Common myeloid progenitor, CD34-positive (primary cell): ENCODE measurements at regions of chr11 and their contacts with region 1.

Region 1: DNA sequence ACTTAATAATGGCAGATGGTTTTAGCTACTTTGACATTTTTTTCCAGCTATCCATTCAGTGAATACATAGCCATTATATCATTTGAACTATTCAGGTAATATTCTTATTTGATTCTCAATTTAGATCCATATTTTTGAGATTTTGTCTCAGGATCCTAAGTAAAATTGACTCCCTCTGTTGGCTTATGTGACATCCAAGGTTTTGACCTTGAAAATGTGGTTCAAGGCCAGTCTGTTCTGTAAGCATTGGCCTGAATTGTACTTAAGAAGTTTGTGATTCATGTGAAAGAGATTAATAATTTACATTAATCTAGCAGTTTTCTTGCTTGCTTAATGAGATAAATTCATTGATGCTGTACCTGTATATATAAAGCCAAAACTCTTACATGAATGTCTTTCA is 1.6 kb upstream of the SLC17A6 start:
- DNase-seq: no peak
- H3K4me3 ChIP-seq: no peak overlapping the region
- H3K27ac ChIP-seq: no peak overlapping the region
- H3K4me1 ChIP-seq: no peaks in the 10 kb centered on the region
- H3K27me3 ChIP-seq: peaks cover 20 to 51% (median 36%) of the 10 kb centered on the region in 5 experiments

Region 2: DNA sequence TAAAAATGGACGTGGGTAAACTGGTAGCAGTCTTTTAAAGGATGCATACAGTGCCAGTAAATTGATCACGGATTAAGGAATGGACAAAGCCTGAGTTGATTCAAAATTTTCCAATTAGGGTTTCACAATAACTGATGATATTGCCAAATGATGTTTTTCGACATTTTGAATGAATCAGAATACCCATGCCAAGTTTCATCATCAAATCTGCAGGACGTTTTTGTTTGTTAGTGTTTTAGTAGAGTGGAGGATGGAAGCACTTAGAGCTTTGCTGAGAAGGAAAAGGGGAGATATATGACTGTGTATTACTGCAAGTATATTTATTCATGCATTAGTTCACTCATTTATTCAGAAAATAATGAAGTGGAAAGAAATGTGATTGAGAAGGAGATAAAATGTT is 79.9 kb after region 1 on chr11:
- CTCF ChIA-PET with region 1: no interaction called
- POLR2A ChIA-PET with region 1: no interaction called
- DNase-seq: no peak
- H3K4me3 ChIP-seq: no peak overlapping the region
- H3K27ac ChIP-seq: no peak overlapping the region
- H3K4me1 ChIP-seq: no peaks in the 10 kb centered on the region
- H3K27me3 ChIP-seq: peaks cover 0 to under 1% (median 0%) of the 10 kb centered on the region in 5 experiments

Region 3: DNA sequence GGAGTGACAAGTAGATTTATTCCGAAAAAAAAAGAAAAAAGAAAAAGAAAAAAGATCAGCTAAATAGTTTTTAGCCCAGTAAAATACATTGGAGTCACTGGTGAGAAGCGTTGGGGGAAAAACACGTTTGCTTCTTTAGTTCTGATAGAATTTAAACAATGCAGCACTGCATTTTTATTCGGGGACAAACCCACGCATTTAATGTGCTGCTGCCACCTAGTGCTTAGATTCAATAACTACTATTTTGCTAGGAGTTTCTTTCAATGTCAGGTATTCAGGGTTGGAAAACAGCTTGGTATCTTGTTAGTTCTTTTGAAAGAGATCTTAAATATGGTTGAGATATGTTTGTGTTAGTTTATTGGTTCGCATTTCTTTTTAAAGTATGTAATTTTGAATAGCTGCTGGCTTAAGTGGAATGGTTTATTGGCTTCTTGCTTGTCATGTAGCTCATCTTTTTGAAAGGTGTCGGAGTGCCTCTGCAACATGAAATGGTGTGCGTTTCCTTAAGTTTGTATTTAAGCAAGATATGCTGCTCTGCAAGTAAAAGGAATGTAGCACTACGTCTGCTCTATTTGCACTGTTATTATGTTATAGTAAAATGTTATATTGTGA is 451.1 kb after region 1 on chr11:
- CTCF ChIA-PET with region 1: interaction called, 15 read pairs
- POLR2A ChIA-PET with region 1: no interaction called
- DNase-seq: peak; percentile 31 to 68 (median 60)
- H3K4me3 ChIP-seq: no peak overlapping the region
- H3K27ac ChIP-seq: no peak overlapping the region
- H3K4me1 ChIP-seq: peaks cover 0 to 2% (median under 1%) of the 10 kb centered on the region in 4 experiments
- H3K27me3 ChIP-seq: no peaks in the 10 kb centered on the region